Activated T-helper 1 cell treated with anti-CD3 and anti-CD28 coated beads, Interleukin-12 subunit alpha, Interleukin-12 subunit beta, Interleukin-2, Interleukin-4 antibody, amounts not matched to agents 30 ng/mL and 10 ng/mL and 1 ng/mL, durations not matched to agents 14 hours and 24 hours and 36 hours (primary cell): ENCODE measurements at regions of chr7 and their contacts with region 1.

Region 1: GRCh38 chr7:151226875-151227782 is at the start of gene ABCF2:
- DNase-seq: peak; percentile 97
- H3K4me3 Mint-ChIP-seq: peak within 1 kb of the TSS; percentile 98
- H3K27ac Mint-ChIP-seq: peak within 1 kb of the TSS; percentile 94
- H3K4me1 Mint-ChIP-seq: peaks cover 43% of the 10 kb centered on the region
- H3K27me3 Mint-ChIP-seq: peaks cover 2% of the 10 kb centered on the region
- total RNA-seq, gene ABCF2: 81.7 and 85.4 TPM in 2 replicates

Region 2: GRCh38 chr7:151057989-151058780 is 168.9 kb before region 1 on chr7:
- intact Hi-C with region 1: loop called (anchors 1 kb)
- DNase-seq: peak; percentile 95
- H3K4me3 Mint-ChIP-seq: peak overlapping the region; percentile 93
- H3K27ac Mint-ChIP-seq: peak overlapping the region; percentile 92
- H3K4me1 Mint-ChIP-seq: peaks cover 46% of the 10 kb centered on the region
- H3K27me3 Mint-ChIP-seq: no peaks in the 10 kb centered on the region

Region 3: DNA sequence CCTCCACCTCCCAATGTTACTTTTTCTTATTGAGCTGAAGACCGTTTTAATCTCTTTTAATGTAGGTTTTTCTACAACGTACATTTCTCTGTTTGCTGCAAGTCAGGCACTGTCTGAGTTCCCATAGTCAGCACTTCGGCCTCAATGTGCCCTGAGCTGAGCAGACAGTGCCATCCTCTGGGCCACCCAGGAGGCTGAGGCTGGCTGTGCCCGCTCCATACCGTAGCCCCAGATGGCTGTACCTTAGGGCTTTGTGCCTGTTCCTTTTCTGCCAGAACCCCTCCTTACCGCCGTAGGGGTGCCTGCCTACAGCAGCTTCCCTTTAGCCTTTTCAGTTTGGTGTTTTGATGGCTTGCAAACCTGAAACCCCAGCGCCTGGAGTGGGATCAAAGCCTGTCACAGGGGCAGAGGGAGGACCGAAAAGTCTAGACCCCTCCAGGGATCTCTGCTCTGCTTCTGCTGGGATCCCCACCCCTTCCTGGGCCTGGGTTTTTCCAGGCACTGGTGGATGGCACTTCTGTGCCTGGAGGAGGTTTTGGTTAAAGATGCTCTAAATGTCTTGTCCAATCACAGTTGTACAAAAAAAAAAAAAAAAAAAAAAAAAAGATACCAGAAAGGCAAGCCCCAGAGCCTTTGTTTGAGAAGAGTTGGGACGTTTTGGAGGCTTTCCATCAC is 131.9 kb before region 1 on chr7:
- intact Hi-C with region 1: no loop called
- DNase-seq: no peak
- H3K4me3 Mint-ChIP-seq: no peak overlapping the region
- H3K27ac Mint-ChIP-seq: no peak overlapping the region
- H3K4me1 Mint-ChIP-seq: peaks cover 9% of the 10 kb centered on the region
- H3K27me3 Mint-ChIP-seq: no peaks in the 10 kb centered on the region

Region 4: DNA sequence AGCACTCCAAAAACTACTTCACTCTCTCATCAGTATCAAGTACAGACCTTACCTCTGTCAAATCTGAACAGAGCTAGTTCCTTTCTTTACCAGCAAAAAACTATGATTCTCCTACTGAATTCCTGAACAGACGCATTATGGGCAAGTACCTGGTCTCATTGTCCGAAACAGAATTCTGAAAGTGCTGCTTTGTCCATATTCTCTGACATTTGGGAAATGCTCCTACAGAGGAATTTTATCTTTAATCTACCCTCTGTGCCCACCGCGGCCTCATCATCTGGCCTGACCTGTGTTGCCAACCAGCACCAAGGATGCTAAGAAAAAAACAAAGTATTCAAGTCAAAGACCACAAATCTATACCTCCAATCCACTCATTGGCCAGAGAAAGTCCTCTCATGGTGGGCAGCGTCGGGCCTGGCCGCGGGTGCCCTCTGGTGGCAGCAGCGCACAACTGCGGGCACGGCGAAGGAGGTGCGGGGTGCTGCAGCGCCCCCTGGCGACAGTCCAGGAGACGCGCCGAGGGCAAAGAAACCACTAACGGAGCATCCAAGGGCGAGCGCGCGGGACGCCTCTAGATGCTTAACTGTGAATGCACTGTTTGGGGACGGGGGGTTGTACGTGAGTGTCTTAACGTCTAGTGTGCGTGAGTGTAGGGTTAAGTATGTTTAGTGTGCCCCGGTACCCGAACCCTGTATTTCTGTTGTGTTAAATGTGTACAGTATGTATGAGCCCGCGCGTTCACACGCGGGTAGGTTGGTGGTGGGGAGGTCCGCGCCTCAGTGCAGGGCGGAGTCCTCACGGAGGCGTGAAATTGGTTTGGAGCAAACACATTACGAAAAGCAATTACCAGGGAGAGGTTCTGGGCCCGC is 54.6 kb before region 1 on chr7:
- intact Hi-C with region 1: loop called (anchors 1 kb)
- DNase-seq: peak; percentile 74
- H3K4me3 Mint-ChIP-seq: no peak overlapping the region
- H3K27ac Mint-ChIP-seq: no peak overlapping the region
- H3K4me1 Mint-ChIP-seq: peaks cover 8% of the 10 kb centered on the region
- H3K27me3 Mint-ChIP-seq: peaks cover 48% of the 10 kb centered on the region

Region 5: GRCh38 chr7:151304856-151305255 is 77.7 kb after region 1 on chr7:
- intact Hi-C with region 1: loop called (anchors 1 kb)
- DNase-seq: no peak
- H3K4me3 Mint-ChIP-seq: peak overlapping the region; percentile 31
- H3K27ac Mint-ChIP-seq: no peak overlapping the region
- H3K4me1 Mint-ChIP-seq: peaks cover 14% of the 10 kb centered on the region
- H3K27me3 Mint-ChIP-seq: peaks cover 33% of the 10 kb centered on the region

Region 6: DNA sequence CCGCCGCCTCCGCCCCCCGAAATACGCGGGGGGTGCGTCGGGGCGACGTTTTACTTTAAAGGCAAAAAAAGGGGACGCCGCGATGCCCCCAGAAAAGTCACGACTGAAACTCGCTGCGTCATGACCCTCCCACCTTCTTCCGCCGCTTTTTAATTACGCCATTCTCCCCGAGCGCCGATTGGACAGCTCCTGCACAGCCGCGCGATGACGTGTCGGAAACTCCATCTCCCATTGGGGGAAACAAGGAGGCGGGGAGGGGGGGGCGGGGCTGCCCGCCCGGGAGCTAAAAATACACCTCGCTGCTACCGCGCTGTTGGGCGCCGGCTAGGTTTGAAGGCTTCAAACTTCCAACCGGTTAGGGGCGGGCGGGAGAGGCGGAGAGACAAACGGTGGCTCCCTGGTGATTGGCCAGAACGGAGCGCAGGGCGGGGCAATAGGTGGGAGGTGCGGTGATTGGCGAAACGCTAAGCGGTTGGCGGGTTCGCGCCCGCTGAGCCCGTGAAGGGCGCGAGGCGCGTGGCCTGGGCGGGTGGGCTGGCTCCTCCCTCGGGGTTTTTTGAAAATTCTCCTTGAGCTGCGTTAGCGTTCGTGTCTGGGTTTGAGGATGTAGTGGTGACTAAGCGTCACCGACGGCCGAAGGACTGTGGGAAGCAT is 292.8 kb after region 1 on chr7 and contains the start of gene RHEB:
- intact Hi-C with region 1: loop called (anchors 1 kb)
- DNase-seq: peak; percentile 97
- H3K4me3 Mint-ChIP-seq: peak within 1 kb of the TSS; percentile 94
- H3K27ac Mint-ChIP-seq: peak within 1 kb of the TSS; percentile 99
- H3K4me1 Mint-ChIP-seq: peaks cover 32% of the 10 kb centered on the region
- H3K27me3 Mint-ChIP-seq: peaks cover 10% of the 10 kb centered on the region
- total RNA-seq, gene RHEB: 62.5 and 65.5 TPM in 2 replicates